Spleen (tissue), 13 donors: ENCODE measurements at regions of chr1 and their contacts with region 1.

Region 1: GRCh38 chr1:172002725-172003345 is 161.5 kb downstream of the DNM3 start:
- DNase-seq: no peak
- H3K4me3 ChIP-seq: no peak overlapping the region
- H3K27ac ChIP-seq: no peak overlapping the region
- H3K4me1 ChIP-seq: peaks cover 0 to 14% (median 1%) of the 10 kb centered on the region in 6 donors
- H3K27me3 ChIP-seq: no peaks in the 10 kb centered on the region
- CTCF ChIP-seq: peak; percentile 24 to 72 (median 55)
- POLR2A ChIP-seq: no peak

Region 2: GRCh38 chr1:172398970-172399755 is 396.3 kb after region 1 on chr1:
- intact Hi-C with region 1: loop called (anchors 10 kb)
- DNase-seq: no peak
- H3K4me3 ChIP-seq: peak overlapping the region in 1 of 8 donors; percentile 41
- H3K27ac ChIP-seq: peak overlapping the region; percentile 15 to 79 (median 72)
- H3K4me1 ChIP-seq: peaks cover 18 to 72% (median 37%) of the 10 kb centered on the region in 6 donors
- H3K27me3 ChIP-seq: no peaks in the 10 kb centered on the region
- CTCF ChIP-seq: peak in 9 of 11 experiments; percentile 34 to 71 (median 52)
- POLR2A ChIP-seq: no peak

Region 3: GRCh38 chr1:172443626-172444453 is 441.0 kb after region 1 on chr1 and contains the start of gene PIGC:
- intact Hi-C with region 1: loop called (anchors 10 kb)
- DNase-seq: peak; percentile 99
- H3K4me3 ChIP-seq: peak within 1 kb of the TSS; percentile 59 to 91 (median 76)
- H3K27ac ChIP-seq: peak within 1 kb of the TSS; percentile 86 to 95 (median 88)
- H3K4me1 ChIP-seq: peaks cover 19 to 52% (median 33%) of the 10 kb centered on the region in 6 donors
- H3K27me3 ChIP-seq: no peaks in the 10 kb centered on the region
- CTCF ChIP-seq: peak; percentile 65 to 95 (median 91)
- POLR2A ChIP-seq: no peak
- total RNA-seq, gene PIGC: 20.1 to 28.0 (median 23.4) TPM